Endothelial cell of umbilical vein (primary cell): ENCODE measurements at regions of chr10 and their contacts with region 1.

Region 1: GRCh38 chr10:29946953-29947700 is 112.3 kb downstream of the JCAD start:
- DNase-seq: peak; percentile 73
- H3K4me3 ChIP-seq: no peak overlapping the region
- H3K27ac ChIP-seq: peak overlapping the region; percentile 33
- H3K4me1 ChIP-seq: peaks cover 51% of the 10 kb centered on the region
- H3K27me3 ChIP-seq: no peaks in the 10 kb centered on the region
- CTCF ChIP-seq: no peak
- POLR2A ChIP-seq: no peak

Region 2: GRCh38 chr10:29608062-29608461 is 339.1 kb before region 1 on chr10:
- CTCF ChIA-PET with region 1: no interaction called
- POLR2A ChIA-PET with region 1: no interaction called
- dilution Hi-C with region 1: no loop called
- intact Hi-C with region 1: no loop called
- DNase-seq: no peak
- H3K4me3 ChIP-seq: no peak overlapping the region
- H3K27ac ChIP-seq: no peak overlapping the region
- H3K4me1 ChIP-seq: no peaks in the 10 kb centered on the region
- H3K27me3 ChIP-seq: no peaks in the 10 kb centered on the region
- CTCF ChIP-seq: no peak
- POLR2A ChIP-seq: no peak

Region 3: GRCh38 chr10:29621161-29621560 is 326.0 kb before region 1 on chr10:
- CTCF ChIA-PET with region 1: no interaction called
- POLR2A ChIA-PET with region 1: no interaction called
- dilution Hi-C with region 1: no loop called
- intact Hi-C with region 1: no loop called
- DNase-seq: no peak
- H3K4me3 ChIP-seq: no peak overlapping the region
- H3K27ac ChIP-seq: no peak overlapping the region
- H3K4me1 ChIP-seq: no peaks in the 10 kb centered on the region
- H3K27me3 ChIP-seq: no peaks in the 10 kb centered on the region
- CTCF ChIP-seq: no peak
- POLR2A ChIP-seq: no peak

Region 4: GRCh38 chr10:29658984-29659965 is 287.9 kb before region 1 on chr10:
- CTCF ChIA-PET with region 1: interaction called, 3 read pairs
- POLR2A ChIA-PET with region 1: no interaction called
- dilution Hi-C with region 1: no loop called
- intact Hi-C with region 1: loop called (anchors 1 kb)
- DNase-seq: peak; percentile 98
- H3K4me3 ChIP-seq: no peak overlapping the region
- H3K27ac ChIP-seq: peak overlapping the region; percentile 92
- H3K4me1 ChIP-seq: peaks cover 41% of the 10 kb centered on the region
- H3K27me3 ChIP-seq: no peaks in the 10 kb centered on the region
- CTCF ChIP-seq: peak in 1 of 2 donors; percentile 49
- POLR2A ChIP-seq: peak; percentile 70

Region 5: DNA sequence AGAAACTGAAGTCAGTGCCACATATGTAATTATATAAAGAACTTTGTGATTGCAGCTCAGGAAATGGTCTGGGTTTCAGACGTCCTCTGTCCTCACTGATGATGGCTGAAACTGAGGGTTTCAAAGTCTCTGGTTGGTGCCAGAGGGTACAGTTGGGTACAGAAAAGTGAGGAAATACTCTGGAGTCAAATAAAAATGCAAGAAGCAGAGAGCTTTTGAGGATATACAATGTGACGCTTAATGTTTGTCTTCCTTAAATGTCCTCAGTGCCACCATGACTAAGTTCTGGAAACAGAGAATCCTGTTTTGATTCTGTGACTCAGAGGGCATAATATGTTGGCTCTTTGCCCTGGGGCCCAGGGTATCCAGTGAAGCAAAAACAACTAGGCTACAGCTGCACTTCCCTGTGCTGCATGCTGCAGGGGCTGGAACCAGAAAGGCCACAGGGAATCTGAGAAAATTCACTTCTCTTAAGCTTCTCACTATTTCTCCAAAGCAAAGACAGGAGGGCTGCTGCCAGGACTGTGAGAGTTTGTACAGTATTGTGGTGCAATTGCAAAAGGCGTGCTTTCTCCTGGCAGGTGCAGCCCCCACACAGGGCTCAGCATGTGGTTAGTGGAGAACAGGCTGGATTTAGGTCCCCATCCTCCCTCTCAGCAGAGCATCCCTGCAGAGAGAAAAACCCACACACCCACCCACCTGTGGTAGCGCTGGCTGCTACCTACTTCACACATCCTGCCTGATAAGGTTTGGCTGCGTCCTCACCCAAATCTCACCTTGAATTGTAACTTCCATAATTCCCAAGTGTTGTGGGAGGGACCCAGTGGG is 142.9 kb before region 1 on chr10:
- CTCF ChIA-PET with region 1: interaction called, 3 read pairs
- POLR2A ChIA-PET with region 1: no interaction called
- dilution Hi-C with region 1: no loop called
- intact Hi-C with region 1: loop called (anchors 1 kb)
- DNase-seq: peak; percentile 99
- H3K4me3 ChIP-seq: peak overlapping the region in 1 of 3 experiments; percentile 31
- H3K27ac ChIP-seq: peak overlapping the region; percentile 99
- H3K4me1 ChIP-seq: peaks cover 54% of the 10 kb centered on the region
- H3K27me3 ChIP-seq: no peaks in the 10 kb centered on the region
- CTCF ChIP-seq: no peak
- POLR2A ChIP-seq: no peak

Region 6: GRCh38 chr10:29857843-29858701 is 89.1 kb before region 1 on chr10:
- CTCF ChIA-PET with region 1: interaction called, 6 read pairs
- POLR2A ChIA-PET with region 1: no interaction called
- dilution Hi-C with region 1: no loop called
- intact Hi-C with region 1: loop called (anchors 1 kb)
- DNase-seq: peak; percentile 92
- H3K4me3 ChIP-seq: no peak overlapping the region
- H3K27ac ChIP-seq: no peak overlapping the region
- H3K4me1 ChIP-seq: peaks cover 21% of the 10 kb centered on the region
- H3K27me3 ChIP-seq: no peaks in the 10 kb centered on the region
- CTCF ChIP-seq: peak; percentile 79 to 86
- POLR2A ChIP-seq: no peak

Region 7: DNA sequence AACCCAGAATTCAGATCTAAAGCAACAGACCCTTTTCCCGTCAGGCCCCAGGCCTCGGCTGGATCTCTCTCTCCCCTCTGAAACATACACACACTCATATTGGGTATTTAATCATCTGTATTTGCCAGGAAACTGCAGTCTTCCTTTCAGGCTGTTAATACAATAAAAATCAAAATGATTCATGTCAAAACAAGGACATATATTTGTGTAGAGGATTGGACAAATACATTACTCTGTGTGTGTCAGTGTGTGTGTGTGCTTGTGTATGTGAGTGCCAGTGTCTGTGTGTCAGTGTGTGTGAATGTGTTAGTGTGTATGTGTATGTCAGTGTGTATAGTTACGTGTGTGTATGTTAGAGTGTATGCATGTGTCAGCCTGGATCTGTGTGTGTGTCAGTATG is 21.5 kb after region 1 on chr10:
- CTCF ChIA-PET with region 1: interaction called, 6 read pairs
- POLR2A ChIA-PET with region 1: no interaction called
- dilution Hi-C with region 1: no loop called
- intact Hi-C with region 1: loop called (anchors 1 kb)
- DNase-seq: peak; percentile 90
- H3K4me3 ChIP-seq: no peak overlapping the region
- H3K27ac ChIP-seq: peak overlapping the region; percentile 83
- H3K4me1 ChIP-seq: peaks cover 17% of the 10 kb centered on the region
- H3K27me3 ChIP-seq: no peaks in the 10 kb centered on the region
- CTCF ChIP-seq: no peak
- POLR2A ChIP-seq: no peak